A549 (cell line): ENCODE measurements at regions of chr17 and their contacts with region 1.

Region 1: DNA sequence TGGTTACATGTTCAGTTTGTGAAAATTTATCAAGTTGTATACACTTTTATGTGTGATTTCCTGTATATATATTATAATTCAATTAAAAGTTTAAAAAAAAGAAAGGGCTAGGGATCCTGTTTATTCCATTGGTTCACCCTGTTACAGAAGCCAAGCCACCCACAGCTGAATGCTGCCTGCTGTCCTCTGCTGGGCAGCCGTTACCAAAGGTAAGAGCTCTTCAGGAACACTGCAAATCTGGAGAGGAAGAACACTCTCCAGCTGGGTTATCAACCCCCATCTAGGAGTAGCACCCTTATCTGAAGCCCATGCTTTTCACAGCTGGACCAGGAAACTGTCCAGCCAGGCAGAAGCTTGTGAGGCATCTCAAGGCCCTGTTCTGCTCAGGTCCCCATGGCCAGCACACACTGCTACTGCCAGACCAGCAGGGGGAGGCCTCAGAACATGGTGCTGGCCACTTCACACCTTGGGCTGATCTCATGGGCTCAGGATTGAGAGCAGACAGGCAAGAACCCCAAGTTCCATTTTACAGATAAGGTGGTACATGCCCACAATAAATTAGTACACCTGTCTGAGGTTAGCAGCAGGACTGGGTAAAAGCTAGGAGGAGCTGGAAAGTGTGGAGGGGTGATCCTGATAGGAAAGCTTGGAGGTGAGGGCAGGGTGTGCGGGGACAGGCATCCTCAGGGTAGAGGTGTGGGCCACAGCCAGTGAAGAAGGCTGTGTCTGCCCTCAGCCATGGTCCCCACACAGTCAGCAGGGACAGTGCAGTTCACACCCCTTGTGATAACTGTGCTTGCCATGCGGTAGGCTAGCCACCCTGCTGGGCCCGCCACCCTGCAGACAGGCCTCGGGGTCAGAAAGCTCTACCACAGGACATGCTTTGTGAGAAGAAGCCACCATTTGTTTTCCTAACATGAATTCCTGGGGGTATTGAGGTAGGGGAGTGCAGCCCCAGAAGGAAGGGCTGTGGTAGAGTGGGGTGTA is 54.3 kb upstream of the SREBF1 start:
- DNase-seq: peak; percentile 88 to 91
- ATAC-seq: peak; percentile 94 to 98
- H3K4me3 ChIP-seq: no peak overlapping the region
- H3K27ac ChIP-seq: peak overlapping the region in 1 of 2 experiments; percentile 26; a peak in 3 of 6 replicates
- H3K4me1 ChIP-seq: 0 out of 3 replicates have a peak, but pooled peaks cover under 1% of the 10 kb centered on the region
- CTCF ChIP-seq: peak; percentile 94
- EP300 ChIP-seq: no peak
- POLR2A ChIP-seq: no peak
- RAD21 ChIP-seq: peak; percentile 98 to 100

Region 2: GRCh38 chr17:17812211-17813057 is 78.6 kb before region 1 on chr17:
- CTCF ChIA-PET with region 1: interaction called, 12 read pairs
- POLR2A ChIA-PET with region 1: no interaction called
- DNase-seq: peak; percentile 82 to 89
- ATAC-seq: peak; percentile 1 to 46; a peak in 3 of 6 replicates
- H3K4me3 ChIP-seq: 0 out of 3 replicates have a peak overlapping the region, but pooled peaks have one; percentile 17
- H3K27ac ChIP-seq: peak overlapping the region; percentile 62 to 78
- H3K4me1 ChIP-seq: peaks cover 63% of the 10 kb centered on the region
- CTCF ChIP-seq: peak; percentile 97
- EP300 ChIP-seq: no peak
- POLR2A ChIP-seq: no peak
- RAD21 ChIP-seq: peak; percentile 90 to 94

Region 3: DNA sequence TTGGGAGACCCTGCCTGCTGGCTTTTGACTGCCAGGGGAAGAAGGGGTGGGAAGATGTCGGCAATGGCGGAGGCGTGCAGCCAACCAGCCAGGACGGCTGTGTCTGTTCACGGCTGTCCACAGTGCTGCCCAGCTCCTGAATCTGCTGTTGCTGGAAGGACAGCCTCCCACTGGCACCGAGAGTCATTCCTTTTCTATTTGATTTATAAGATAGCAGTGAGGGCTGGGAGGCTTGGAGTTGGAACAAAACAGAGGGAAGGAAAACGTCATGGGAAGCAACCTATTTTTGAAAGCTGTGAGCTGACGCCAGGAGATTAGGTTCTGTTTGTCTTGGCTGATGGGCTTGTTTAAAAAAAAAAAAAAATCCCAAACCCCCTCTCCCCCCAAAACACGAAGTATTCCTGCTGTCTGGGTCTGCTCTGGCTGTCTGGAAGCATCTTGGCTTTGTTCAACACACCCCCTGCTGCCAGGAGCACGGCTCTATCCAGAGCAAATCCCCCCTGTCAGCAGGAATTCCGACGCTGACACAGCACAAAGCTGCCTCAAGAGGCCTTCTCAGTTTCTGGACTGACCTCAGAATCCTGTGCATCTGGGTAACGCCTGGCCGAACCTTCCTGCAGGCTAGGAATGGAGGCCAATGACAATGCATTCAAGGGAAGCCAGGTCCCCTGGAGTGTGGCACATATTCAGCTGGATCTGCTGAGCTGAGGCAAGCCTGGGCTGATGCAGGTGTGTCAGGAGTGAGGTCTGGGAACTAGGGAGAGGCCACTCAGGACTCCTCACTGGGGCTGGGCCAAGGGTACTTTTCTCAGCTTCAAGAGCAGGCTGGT is 13.3 kb before region 1 on chr17:
- CTCF ChIA-PET with region 1: interaction called, 107 read pairs
- POLR2A ChIA-PET with region 1: no interaction called
- DNase-seq: no peak
- ATAC-seq: no peak
- H3K4me3 ChIP-seq: no peak overlapping the region
- H3K27ac ChIP-seq: no peak overlapping the region
- H3K4me1 ChIP-seq: peaks cover 5% of the 10 kb centered on the region; the same call in 1 of the 3 replicates
- CTCF ChIP-seq: no peak
- EP300 ChIP-seq: no peak
- POLR2A ChIP-seq: no peak
- RAD21 ChIP-seq: no peak

Region 4: GRCh38 chr17:17928398-17929287 is 37.6 kb after region 1 on chr17:
- CTCF ChIA-PET with region 1: interaction called, 313 read pairs
- POLR2A ChIA-PET with region 1: no interaction called
- DNase-seq: no peak
- ATAC-seq: peak in 1 of 2 experiments; percentile 31; a peak in 1 of 6 replicates
- H3K4me3 ChIP-seq: no peak overlapping the region
- H3K27ac ChIP-seq: no peak overlapping the region
- H3K4me1 ChIP-seq: peaks cover 11% of the 10 kb centered on the region; the same call in 2 of the 3 replicates
- CTCF ChIP-seq: no peak
- EP300 ChIP-seq: no peak
- POLR2A ChIP-seq: no peak
- RAD21 ChIP-seq: no peak

Region 5: GRCh38 chr17:17959520-17960361 is 68.7 kb after region 1 on chr17:
- CTCF ChIA-PET with region 1: interaction called, 22 read pairs
- POLR2A ChIA-PET with region 1: no interaction called
- DNase-seq: peak; percentile 33 to 56
- ATAC-seq: peak; percentile 9 to 21; a peak in 4 of 6 replicates
- H3K4me3 ChIP-seq: peak overlapping the region; percentile 20; the same call in 2 of the 3 replicates
- H3K27ac ChIP-seq: peak overlapping the region; percentile 74 to 83
- H3K4me1 ChIP-seq: peaks cover 39% of the 10 kb centered on the region
- CTCF ChIP-seq: no peak
- EP300 ChIP-seq: no peak
- POLR2A ChIP-seq: no peak
- RAD21 ChIP-seq: 0 out of 5 replicates have a peak, but pooled peaks of 1 of the 2 experiments have one; percentile 1

Region 6: GRCh38 chr17:17994271-17995069 is 103.4 kb after region 1 on chr17:
- CTCF ChIA-PET with region 1: interaction called, 18 read pairs
- POLR2A ChIA-PET with region 1: no interaction called
- DNase-seq: peak; percentile 62 to 74
- ATAC-seq: peak; percentile 73 to 82
- H3K4me3 ChIP-seq: no peak overlapping the region
- H3K27ac ChIP-seq: peak overlapping the region in 1 of 2 experiments; percentile 84; a peak in 2 of 6 replicates
- H3K4me1 ChIP-seq: peaks cover 38% of the 10 kb centered on the region
- CTCF ChIP-seq: peak; percentile 52
- EP300 ChIP-seq: no peak
- POLR2A ChIP-seq: no peak
- RAD21 ChIP-seq: peak; percentile 38 to 48; a peak in 3 of 5 replicates

Region 7: DNA sequence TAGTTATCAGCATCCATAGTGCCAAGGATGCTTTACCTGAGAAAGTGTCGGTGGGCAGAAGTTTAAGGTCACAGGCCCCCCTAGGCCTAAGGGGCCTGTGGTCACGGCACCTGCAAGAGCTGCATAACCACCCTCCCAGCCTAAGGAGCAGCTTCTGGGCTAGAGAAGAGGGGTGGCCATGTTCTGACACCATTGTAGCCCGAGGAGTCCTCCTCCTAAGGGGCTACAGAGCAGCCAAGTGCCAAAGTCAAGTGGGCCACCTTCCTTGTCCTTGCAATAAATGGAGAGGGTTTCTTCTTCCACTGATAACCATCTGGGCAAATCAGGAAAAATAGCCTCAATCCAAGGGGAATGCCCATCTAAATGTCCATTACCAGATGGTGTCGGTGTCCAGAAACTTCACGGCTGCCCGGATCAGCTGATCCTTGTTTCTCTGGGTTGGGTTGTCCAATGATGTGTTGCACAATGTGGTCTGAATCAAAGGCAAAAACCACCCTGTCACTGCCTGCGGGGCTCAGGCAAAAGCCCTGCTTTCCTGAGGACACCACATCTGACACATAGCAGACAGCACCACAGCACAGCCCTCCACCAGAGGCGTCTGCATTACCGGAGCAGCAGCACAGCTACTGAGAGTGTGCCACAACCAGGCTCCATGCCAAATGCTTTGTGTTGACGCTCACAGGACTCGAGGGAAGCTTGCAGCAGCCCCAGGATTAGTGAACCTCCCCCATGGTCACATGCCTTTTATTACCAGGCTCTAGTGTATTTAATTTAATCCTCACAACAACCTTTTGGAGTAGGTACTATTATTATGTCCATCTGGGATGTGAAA is 135.1 kb after region 1 on chr17:
- CTCF ChIA-PET with region 1: interaction called, 214 read pairs
- POLR2A ChIA-PET with region 1: no interaction called
- DNase-seq: no peak
- ATAC-seq: peak in 1 of 2 experiments; percentile 31; a peak in 1 of 6 replicates
- H3K4me3 ChIP-seq: no peak overlapping the region
- H3K27ac ChIP-seq: no peak overlapping the region
- H3K4me1 ChIP-seq: peaks cover 11% of the 10 kb centered on the region; the same call in 2 of the 3 replicates
- CTCF ChIP-seq: no peak
- EP300 ChIP-seq: no peak
- POLR2A ChIP-seq: no peak
- RAD21 ChIP-seq: no peak